ENCODE measurements at regions of chr7 and their contacts with region 1.

Region 1: GRCh38 chr7:66628361-66629140 is at the start of gene KCTD7:
- DNase-seq: peak; percentile 98
- H3K4me3 ChIP-seq: peak within 1 kb of the TSS; percentile 99
- H3K4me3 Mint-ChIP-seq: peak within 1 kb of the TSS; percentile 81
- H3K27ac Mint-ChIP-seq: peak within 1 kb of the TSS; percentile 81
- H3K4me1 ChIP-seq: peaks cover 6% of the 10 kb centered on the region; the same call in 1 of the 2 replicates
- H3K4me1 Mint-ChIP-seq: peaks cover 7% of the 10 kb centered on the region
- H3K27me3 ChIP-seq: no peaks in the 10 kb centered on the region
- H3K27me3 Mint-ChIP-seq: no peaks in the 10 kb centered on the region
- CTCF ChIP-seq: no peak
- total RNA-seq, gene KCTD7: 17.0 and 17.3 TPM in 2 replicates

Region 2: GRCh38 chr7:66419210-66419609 is 209.3 kb before region 1 on chr7:
- CTCF ChIA-PET with region 1: no interaction called
- POLR2A ChIA-PET with region 1: no interaction called
- intact Hi-C with region 1: no loop called
- DNase-seq: no peak
- H3K4me3 ChIP-seq: no peak overlapping the region
- H3K4me3 Mint-ChIP-seq: no peak overlapping the region
- H3K27ac Mint-ChIP-seq: no peak overlapping the region
- H3K4me1 ChIP-seq: no peaks in the 10 kb centered on the region
- H3K4me1 Mint-ChIP-seq: peaks cover 6% of the 10 kb centered on the region
- H3K27me3 ChIP-seq: no peaks in the 10 kb centered on the region
- H3K27me3 Mint-ChIP-seq: no peaks in the 10 kb centered on the region
- CTCF ChIP-seq: no peak

Region 3: DNA sequence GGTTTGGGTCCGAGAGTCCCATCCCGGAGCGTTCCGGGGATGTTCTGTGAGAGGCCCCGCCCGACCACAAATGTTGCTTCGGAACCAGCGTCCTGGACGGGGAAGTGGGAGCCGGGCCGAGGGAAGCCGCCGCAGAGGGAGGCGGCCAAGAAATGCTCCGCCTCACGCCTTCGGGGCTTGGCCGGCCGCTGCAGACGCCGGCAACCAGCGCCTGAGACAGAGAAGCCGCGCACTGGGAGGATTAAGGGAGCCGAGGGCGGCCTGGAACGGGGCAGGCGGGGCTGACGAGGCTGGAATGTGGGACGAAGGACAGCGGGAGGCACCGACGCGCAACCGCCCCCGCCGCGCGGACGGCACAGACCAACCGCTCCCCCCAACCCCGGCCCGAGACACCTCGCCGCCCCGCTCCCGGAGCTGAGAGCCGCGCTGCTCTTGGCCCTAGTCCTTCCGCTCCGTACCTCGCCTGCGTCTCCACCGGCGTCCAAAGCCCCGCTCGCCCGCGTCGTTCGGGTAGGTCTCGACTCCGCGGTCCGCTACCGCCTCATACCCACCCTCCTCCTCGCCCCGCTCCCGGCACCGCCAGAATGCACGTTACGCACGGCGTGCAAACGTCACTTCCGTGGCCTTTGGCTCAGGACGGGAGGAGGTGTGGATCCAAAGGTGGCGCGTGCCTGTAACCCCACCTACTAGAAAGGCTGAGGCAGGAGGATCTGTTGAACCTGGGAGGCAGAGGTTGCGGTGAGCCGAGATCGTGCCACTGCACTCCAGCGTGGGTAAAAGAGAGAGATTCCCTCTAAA is 36.6 kb before region 1 on chr7:
- CTCF ChIA-PET with region 1: no interaction called
- POLR2A ChIA-PET with region 1: no interaction called
- intact Hi-C with region 1: loop called (anchors 2 kb)
- DNase-seq: peak; percentile 94 to 95
- H3K4me3 ChIP-seq: peak overlapping the region; percentile 99
- H3K4me3 Mint-ChIP-seq: peak overlapping the region; percentile 97
- H3K27ac Mint-ChIP-seq: peak overlapping the region; percentile 99
- H3K4me1 ChIP-seq: peaks cover 7% of the 10 kb centered on the region; the same call in 1 of the 2 replicates
- H3K4me1 Mint-ChIP-seq: peaks cover 25% of the 10 kb centered on the region
- H3K27me3 ChIP-seq: no peaks in the 10 kb centered on the region
- H3K27me3 Mint-ChIP-seq: no peaks in the 10 kb centered on the region
- CTCF ChIP-seq: no peak

Region 4: GRCh38 chr7:66617295-66617694 is 11.3 kb before region 1 on chr7:
- CTCF ChIA-PET with region 1: no interaction called
- POLR2A ChIA-PET with region 1: interaction called, 6 read pairs
- intact Hi-C with region 1: loop called (anchors 1 kb)
- DNase-seq: no peak
- H3K4me3 ChIP-seq: no peak overlapping the region
- H3K4me3 Mint-ChIP-seq: no peak overlapping the region
- H3K27ac Mint-ChIP-seq: no peak overlapping the region
- H3K4me1 ChIP-seq: peaks cover 34% of the 10 kb centered on the region
- H3K4me1 Mint-ChIP-seq: peaks cover 12% of the 10 kb centered on the region
- H3K27me3 ChIP-seq: no peaks in the 10 kb centered on the region
- H3K27me3 Mint-ChIP-seq: no peaks in the 10 kb centered on the region
- CTCF ChIP-seq: no peak

Region 5: DNA sequence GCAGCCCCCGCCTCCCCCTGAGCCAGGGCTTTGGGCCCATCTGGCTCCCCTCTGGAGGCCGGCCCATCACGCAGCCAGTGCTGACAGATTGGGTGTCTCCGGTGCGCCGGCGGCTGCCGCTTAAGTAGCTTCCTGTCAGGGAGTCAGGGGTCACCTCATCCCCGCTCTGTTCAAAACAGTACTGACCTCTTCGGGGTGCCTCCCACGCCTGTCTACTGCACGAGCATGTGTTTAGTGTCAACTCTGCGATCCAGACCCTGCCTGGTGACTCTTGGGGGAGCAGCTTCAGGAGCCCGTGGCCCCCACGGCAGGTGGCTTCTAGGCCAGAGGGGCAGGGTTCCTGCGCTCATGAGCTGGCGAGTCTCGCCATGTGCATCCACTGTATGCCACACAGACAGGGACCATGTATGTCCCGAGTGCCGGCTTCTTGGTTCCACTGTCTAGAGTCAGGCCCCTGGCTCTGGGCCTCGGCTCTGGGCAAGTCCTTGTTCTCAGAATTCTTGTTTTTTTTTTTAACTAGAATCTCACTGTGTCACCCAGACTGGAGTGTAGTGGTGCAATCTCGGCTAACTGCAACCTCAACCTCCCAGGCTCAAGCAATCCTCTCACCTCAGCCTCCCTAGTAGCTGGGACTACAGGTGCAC is 36.2 kb after region 1 on chr7:
- CTCF ChIA-PET with region 1: no interaction called
- POLR2A ChIA-PET with region 1: no interaction called
- intact Hi-C with region 1: no loop called
- DNase-seq: no peak
- H3K4me3 ChIP-seq: no peak overlapping the region
- H3K4me3 Mint-ChIP-seq: no peak overlapping the region
- H3K27ac Mint-ChIP-seq: no peak overlapping the region
- H3K4me1 ChIP-seq: no peaks in the 10 kb centered on the region
- H3K4me1 Mint-ChIP-seq: no peaks in the 10 kb centered on the region
- H3K27me3 ChIP-seq: no peaks in the 10 kb centered on the region
- H3K27me3 Mint-ChIP-seq: no peaks in the 10 kb centered on the region
- CTCF ChIP-seq: no peak

Region 6: DNA sequence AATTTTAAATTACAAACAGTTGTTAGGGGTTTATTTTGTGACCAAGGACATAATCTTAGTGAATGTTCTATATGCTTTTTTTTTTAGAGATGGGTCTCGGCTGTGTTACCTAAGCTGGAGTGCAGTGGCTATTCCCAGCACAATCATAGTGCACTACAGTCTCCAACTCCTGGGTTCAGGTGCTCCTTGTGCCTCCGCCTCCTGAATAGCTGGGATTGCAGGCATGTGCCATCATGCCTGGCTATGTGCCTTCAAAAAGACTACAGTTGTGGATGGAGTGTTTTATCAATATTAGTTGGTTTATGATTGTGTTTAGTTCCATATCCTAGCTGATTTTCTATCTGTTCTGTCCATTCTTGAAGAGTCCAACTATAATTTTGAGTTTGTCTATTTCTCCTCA is 87.1 kb after region 1 on chr7:
- CTCF ChIA-PET with region 1: no interaction called
- POLR2A ChIA-PET with region 1: no interaction called
- intact Hi-C with region 1: no loop called
- DNase-seq: no peak
- H3K4me3 ChIP-seq: no peak overlapping the region
- H3K4me3 Mint-ChIP-seq: no peak overlapping the region
- H3K27ac Mint-ChIP-seq: no peak overlapping the region
- H3K4me1 ChIP-seq: no peaks in the 10 kb centered on the region
- H3K4me1 Mint-ChIP-seq: no peaks in the 10 kb centered on the region
- H3K27me3 ChIP-seq: no peaks in the 10 kb centered on the region
- H3K27me3 Mint-ChIP-seq: no peaks in the 10 kb centered on the region
- CTCF ChIP-seq: no peak

Region 7: DNA sequence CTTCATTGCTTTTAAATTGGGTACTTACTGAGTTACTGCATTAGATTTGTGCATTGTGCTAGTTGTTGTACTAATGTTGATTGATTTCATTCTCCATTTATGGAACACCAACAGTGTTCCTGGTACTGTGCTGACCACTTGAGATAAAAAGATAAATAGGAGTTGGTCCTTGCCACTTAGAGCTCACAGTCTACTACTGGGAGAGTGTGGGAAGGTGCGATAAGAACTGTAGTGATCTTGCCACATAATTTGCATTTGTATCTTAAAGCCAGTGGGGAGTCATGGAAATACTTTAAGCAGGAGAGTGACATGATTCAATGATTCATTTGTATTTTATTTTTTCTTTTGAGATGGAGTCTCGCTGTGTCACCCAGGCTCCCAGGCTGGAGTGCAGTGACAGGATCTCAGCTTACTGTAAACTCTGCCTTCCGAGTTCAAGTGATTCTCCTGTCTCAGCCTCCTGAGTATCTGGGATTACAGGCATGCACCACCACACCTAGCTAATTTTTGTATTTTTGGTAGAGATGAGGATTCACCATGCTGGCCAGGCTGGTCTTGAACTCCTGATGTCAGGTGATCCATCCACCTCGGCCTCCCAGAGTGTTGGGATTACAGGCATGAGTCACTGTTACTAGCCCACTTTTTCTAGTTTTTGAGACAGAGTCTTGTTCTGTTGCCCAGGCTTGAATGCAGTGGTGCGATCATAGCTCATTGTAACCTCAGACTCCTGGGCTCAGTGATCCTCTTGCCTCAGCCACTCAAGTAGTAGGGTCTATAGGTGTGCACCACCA is 241.3 kb after region 1 on chr7:
- CTCF ChIA-PET with region 1: no interaction called
- POLR2A ChIA-PET with region 1: no interaction called
- intact Hi-C with region 1: no loop called
- DNase-seq: no peak
- H3K4me3 ChIP-seq: no peak overlapping the region
- H3K4me3 Mint-ChIP-seq: no peak overlapping the region
- H3K27ac Mint-ChIP-seq: no peak overlapping the region
- H3K4me1 ChIP-seq: peaks cover 25% of the 10 kb centered on the region
- H3K4me1 Mint-ChIP-seq: peaks cover 22% of the 10 kb centered on the region
- H3K27me3 ChIP-seq: no peaks in the 10 kb centered on the region
- H3K27me3 Mint-ChIP-seq: no peaks in the 10 kb centered on the region
- CTCF ChIP-seq: no peak

Measured in Caco-2 (cell line).